B cell (primary cell): ENCODE measurements at regions of chr6 and their contacts with region 1.

Region 1: GRCh38 chr6:106979427-106979884 is 4.9 kb upstream of the CD24 start:
- DNase-seq: peak; percentile 88
- ATAC-seq: peak; percentile 25
- H3K4me3 ChIP-seq: no peak overlapping the region
- H3K4me3 Mint-ChIP-seq: no peak overlapping the region
- H3K27ac ChIP-seq: no peak overlapping the region
- H3K27ac Mint-ChIP-seq: peak overlapping the region; percentile 59
- H3K4me1 ChIP-seq: peaks cover 6 to 11% of the 10 kb centered on the region in 2 donors
- H3K4me1 Mint-ChIP-seq: peaks cover 20% of the 10 kb centered on the region
- H3K27me3 ChIP-seq: peaks cover 0 to 4% (median 0%) of the 10 kb centered on the region in 4 experiments
- H3K27me3 Mint-ChIP-seq: peaks cover 6% of the 10 kb centered on the region
- CTCF ChIP-seq: peak; percentile 98

Region 2: DNA sequence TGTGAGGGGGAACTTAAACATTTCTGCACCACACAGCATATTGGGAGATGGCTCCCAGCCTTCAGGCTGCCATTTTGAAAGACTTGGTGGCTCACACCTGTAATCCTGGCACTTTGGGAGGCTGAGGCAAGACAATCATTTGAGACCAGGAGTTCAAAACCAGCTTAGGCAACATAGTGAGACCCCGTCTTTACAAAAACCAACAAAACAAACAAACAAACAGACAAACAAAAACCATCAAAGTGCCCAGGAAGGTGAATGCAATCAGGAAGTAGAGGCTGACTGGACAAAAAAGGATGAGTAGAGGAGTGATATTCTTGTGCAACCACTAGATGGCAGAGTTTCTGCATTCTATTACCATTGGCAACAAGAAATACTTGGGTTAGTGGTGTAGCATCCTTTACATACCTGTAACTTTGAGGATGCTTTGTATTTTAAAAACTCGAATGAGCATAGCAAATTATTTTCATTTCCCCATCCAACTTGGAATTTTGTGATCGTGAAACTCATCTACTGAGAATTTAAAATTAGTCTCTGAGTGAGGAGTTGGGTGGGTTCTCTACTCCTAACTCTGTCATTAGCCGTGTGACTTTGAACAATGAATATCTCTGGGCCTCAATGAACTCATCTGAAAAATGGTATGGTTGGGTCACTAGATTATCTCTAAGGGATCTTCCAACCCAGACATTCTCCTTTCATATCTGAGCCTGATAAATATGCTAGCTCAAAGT is 534.5 kb before region 1 on chr6:
- CTCF ChIA-PET with region 1: interaction called, 74 read pairs
- POLR2A ChIA-PET with region 1: no interaction called
- intact Hi-C with region 1: loop called (anchors 1 kb)
- DNase-seq: peak; percentile 79
- ATAC-seq: peak; percentile 59
- H3K4me3 ChIP-seq: no peak overlapping the region
- H3K4me3 Mint-ChIP-seq: no peak overlapping the region
- H3K27ac ChIP-seq: no peak overlapping the region
- H3K27ac Mint-ChIP-seq: peak overlapping the region; percentile 60
- H3K4me1 ChIP-seq: peaks cover 19 to 22% of the 10 kb centered on the region in 2 donors
- H3K4me1 Mint-ChIP-seq: peaks cover 20% of the 10 kb centered on the region
- H3K27me3 ChIP-seq: peaks cover 0 to 3% (median 0%) of the 10 kb centered on the region in 4 experiments
- H3K27me3 Mint-ChIP-seq: peaks cover 20% of the 10 kb centered on the region
- CTCF ChIP-seq: peak; percentile 92

Region 3: GRCh38 chr6:106608062-106608668 is 371.3 kb before region 1 on chr6:
- CTCF ChIA-PET with region 1: interaction called, 229 read pairs
- POLR2A ChIA-PET with region 1: interaction called, 6 read pairs
- intact Hi-C with region 1: loop called (anchors 1 kb)
- DNase-seq: peak; percentile 85
- ATAC-seq: peak; percentile 89
- H3K4me3 ChIP-seq: no peak overlapping the region
- H3K4me3 Mint-ChIP-seq: no peak overlapping the region
- H3K27ac ChIP-seq: no peak overlapping the region
- H3K27ac Mint-ChIP-seq: no peak overlapping the region
- H3K4me1 ChIP-seq: peaks cover 25 to 39% of the 10 kb centered on the region in 2 donors
- H3K4me1 Mint-ChIP-seq: peaks cover 43% of the 10 kb centered on the region
- H3K27me3 ChIP-seq: no peaks in the 10 kb centered on the region
- H3K27me3 Mint-ChIP-seq: no peaks in the 10 kb centered on the region
- CTCF ChIP-seq: peak; percentile 92

Region 4: DNA sequence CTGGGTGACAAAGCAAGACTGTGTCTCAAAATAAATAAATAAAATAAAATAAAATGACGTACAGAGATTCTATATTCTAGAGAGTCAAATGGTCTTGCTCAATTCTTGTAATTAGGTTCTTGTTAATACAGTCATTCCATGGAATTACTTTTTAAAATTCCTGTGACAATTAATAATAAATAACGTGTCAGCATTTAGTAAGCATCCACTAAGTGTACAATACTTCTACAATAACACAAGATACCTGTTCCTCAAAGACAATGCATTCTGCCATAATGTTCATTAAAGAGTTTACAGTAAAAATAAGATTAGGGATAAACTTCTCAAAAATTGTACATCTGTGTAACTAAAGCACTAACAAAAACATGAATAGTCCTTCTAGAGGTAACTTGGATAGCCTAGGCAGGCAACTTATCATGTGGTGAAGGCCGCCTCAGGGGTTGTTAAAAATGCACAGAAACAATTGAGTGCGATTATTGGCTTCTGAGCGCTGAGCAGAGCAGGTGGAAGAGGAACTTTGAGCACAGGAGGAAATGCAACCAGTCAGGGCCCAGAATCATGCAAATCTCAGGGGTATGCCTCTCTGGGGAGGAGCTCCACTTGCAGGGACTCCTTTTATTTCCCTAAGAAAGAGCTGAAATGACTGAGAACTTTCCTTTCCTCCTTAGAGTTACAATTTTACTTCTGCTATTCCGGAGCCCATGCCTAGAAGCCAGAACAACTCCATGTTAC is 313.0 kb before region 1 on chr6:
- CTCF ChIA-PET with region 1: interaction called, 6 read pairs
- POLR2A ChIA-PET with region 1: no interaction called
- intact Hi-C with region 1: loop called (anchors 1 kb)
- DNase-seq: peak; percentile 86
- ATAC-seq: peak; percentile 99
- H3K4me3 ChIP-seq: peak overlapping the region in 2 of 5 experiments; percentile 2 to 29
- H3K4me3 Mint-ChIP-seq: peak overlapping the region; percentile 80
- H3K27ac ChIP-seq: peak overlapping the region; percentile 30 to 81
- H3K27ac Mint-ChIP-seq: peak overlapping the region; percentile 93
- H3K4me1 ChIP-seq: peaks cover 49 to 61% of the 10 kb centered on the region in 2 donors
- H3K4me1 Mint-ChIP-seq: peaks cover 64% of the 10 kb centered on the region
- H3K27me3 ChIP-seq: no peaks in the 10 kb centered on the region
- H3K27me3 Mint-ChIP-seq: no peaks in the 10 kb centered on the region
- CTCF ChIP-seq: no peak

Region 5: DNA sequence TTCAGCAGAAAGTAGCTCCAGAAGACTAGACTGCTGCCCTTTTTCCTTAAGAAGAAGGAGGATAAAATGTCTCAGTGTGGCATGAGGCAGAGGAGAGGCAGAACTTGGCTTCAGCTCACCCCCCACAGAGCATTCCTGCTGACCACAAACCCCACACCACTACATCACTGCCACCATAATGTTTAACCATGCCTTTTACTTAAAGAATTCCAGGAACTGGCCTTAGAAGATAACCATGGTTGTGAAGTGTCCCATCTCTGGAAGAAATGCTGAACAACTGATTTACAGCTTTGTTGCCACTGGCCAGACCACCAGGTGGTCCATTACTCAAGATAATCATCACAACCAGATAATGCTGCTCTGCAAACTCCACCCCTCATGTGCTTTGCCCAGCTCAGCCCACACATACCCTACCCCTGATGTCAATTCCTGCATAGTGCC is 159.0 kb before region 1 on chr6:
- CTCF ChIA-PET with region 1: no interaction called
- POLR2A ChIA-PET with region 1: no interaction called
- intact Hi-C with region 1: no loop called
- DNase-seq: no peak
- ATAC-seq: no peak
- H3K4me3 ChIP-seq: no peak overlapping the region
- H3K4me3 Mint-ChIP-seq: no peak overlapping the region
- H3K27ac ChIP-seq: no peak overlapping the region
- H3K27ac Mint-ChIP-seq: no peak overlapping the region
- H3K4me1 ChIP-seq: no peaks in the 10 kb centered on the region
- H3K4me1 Mint-ChIP-seq: no peaks in the 10 kb centered on the region
- H3K27me3 ChIP-seq: no peaks in the 10 kb centered on the region
- H3K27me3 Mint-ChIP-seq: no peaks in the 10 kb centered on the region
- CTCF ChIP-seq: no peak

Region 6: GRCh38 chr6:106844930-106845329 is 134.5 kb before region 1 on chr6:
- CTCF ChIA-PET with region 1: interaction called, 5 read pairs
- POLR2A ChIA-PET with region 1: no interaction called
- intact Hi-C with region 1: loop called (anchors 5 kb)
- DNase-seq: peak; percentile 49
- ATAC-seq: no peak
- H3K4me3 ChIP-seq: no peak overlapping the region
- H3K4me3 Mint-ChIP-seq: peak overlapping the region; percentile 8
- H3K27ac ChIP-seq: peak overlapping the region in 1 of 2 donors; percentile 77
- H3K27ac Mint-ChIP-seq: peak overlapping the region; percentile 23
- H3K4me1 ChIP-seq: peaks cover 40 to 49% of the 10 kb centered on the region in 2 donors
- H3K4me1 Mint-ChIP-seq: peaks cover 47% of the 10 kb centered on the region
- H3K27me3 ChIP-seq: no peaks in the 10 kb centered on the region
- H3K27me3 Mint-ChIP-seq: no peaks in the 10 kb centered on the region
- CTCF ChIP-seq: no peak